Left lung (tissue), 14 donors: ENCODE measurements at regions of chr10 and their contacts with region 1.

Region 1: DNA sequence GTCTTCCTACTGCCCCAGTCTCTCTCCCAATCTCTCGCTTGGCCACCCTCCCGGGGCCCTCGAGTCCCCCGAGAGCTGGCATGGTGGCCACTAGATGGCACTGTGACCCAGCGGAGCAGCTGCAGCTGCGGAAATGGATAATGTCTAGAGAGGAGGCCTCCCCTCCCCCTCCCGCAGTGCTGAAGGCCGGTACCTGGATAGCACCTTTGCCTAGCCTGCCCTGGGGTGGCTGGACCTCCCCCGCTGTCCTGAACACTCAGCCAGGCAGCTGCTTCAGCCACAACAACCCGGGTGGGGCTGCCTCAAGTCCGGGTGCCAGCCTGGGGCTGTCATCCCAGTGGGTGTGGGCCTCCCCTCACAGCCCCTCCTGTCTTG is 65.2 kb downstream of the GOLGA7B start:
- DNase-seq: peak; percentile 57 to 91 (median 77)
- ATAC-seq: peak; percentile 91
- H3K4me3 ChIP-seq: no peak overlapping the region
- H3K27ac ChIP-seq: no peak overlapping the region
- H3K4me1 ChIP-seq: peaks cover 0 to 2% of the 10 kb centered on the region in 2 donors
- H3K27me3 ChIP-seq: peaks cover 0 to 36% of the 10 kb centered on the region in 2 donors
- CTCF ChIP-seq: peak; percentile 86 to 93

Region 2: GRCh38 chr10:97623277-97623676 is 291.5 kb before region 1 on chr10:
- intact Hi-C with region 1: no loop called
- DNase-seq: no peak
- ATAC-seq: no peak
- H3K4me3 ChIP-seq: no peak overlapping the region
- H3K27ac ChIP-seq: no peak overlapping the region
- H3K4me1 ChIP-seq: no peaks in the 10 kb centered on the region
- H3K27me3 ChIP-seq: no peaks in the 10 kb centered on the region
- CTCF ChIP-seq: no peak

Region 3: GRCh38 chr10:97981816-97982215 is 67.0 kb after region 1 on chr10:
- intact Hi-C with region 1: no loop called
- DNase-seq: no peak
- ATAC-seq: no peak
- H3K4me3 ChIP-seq: no peak overlapping the region
- H3K27ac ChIP-seq: no peak overlapping the region
- H3K4me1 ChIP-seq: no peaks in the 10 kb centered on the region
- H3K27me3 ChIP-seq: peaks cover 0 to 36% of the 10 kb centered on the region in 2 donors
- CTCF ChIP-seq: no peak

Region 4: GRCh38 chr10:97991871-97992270 is 77.0 kb after region 1 on chr10:
- intact Hi-C with region 1: no loop called
- DNase-seq: peak in 2 of 4 donors; percentile 15 to 39
- ATAC-seq: peak; percentile 38
- H3K4me3 ChIP-seq: no peak overlapping the region
- H3K27ac ChIP-seq: no peak overlapping the region
- H3K4me1 ChIP-seq: no peaks in the 10 kb centered on the region
- H3K27me3 ChIP-seq: peaks cover 0 to 10% of the 10 kb centered on the region in 2 donors
- CTCF ChIP-seq: no peak

Region 5: DNA sequence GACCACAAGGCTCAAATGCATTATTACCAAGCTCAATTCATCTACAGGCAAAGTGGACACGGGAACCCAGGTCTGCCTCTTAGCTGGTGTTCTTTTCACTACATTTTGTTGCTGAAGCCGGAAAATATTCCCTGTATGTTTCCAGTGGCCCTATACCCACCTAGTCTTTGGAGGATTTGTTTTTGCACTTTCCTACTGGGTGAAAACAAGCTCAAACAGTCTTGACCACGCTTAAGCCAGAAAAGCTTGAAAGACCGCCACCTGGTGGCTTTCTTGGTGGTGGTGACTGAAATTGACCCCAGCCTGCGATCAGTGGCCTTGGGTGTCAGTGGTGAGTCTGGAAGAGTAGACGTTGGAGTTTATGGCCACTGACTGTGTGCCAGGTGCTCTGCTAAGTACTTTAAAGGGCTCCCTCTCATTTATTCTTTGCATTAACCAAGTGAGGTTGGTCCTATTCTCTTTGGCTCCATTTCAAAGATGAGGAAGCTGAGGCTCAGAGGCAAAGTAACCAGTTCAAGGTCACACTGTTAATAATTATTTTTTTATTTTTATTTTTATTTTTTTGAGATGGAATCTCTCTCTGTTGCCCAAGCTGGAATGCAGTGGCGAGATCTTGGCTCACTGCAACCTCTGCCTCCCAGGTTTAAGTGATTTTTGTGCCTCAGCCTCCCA is 126.7 kb after region 1 on chr10:
- intact Hi-C with region 1: loop called in 1 of 2 experiments (anchors 5 kb)
- DNase-seq: peak in 3 of 4 donors; percentile 31 to 62 (median 43)
- ATAC-seq: peak; percentile 78
- H3K4me3 ChIP-seq: no peak overlapping the region
- H3K27ac ChIP-seq: no peak overlapping the region
- H3K4me1 ChIP-seq: no peaks in the 10 kb centered on the region
- H3K27me3 ChIP-seq: peaks cover 0 to 64% of the 10 kb centered on the region in 2 donors
- CTCF ChIP-seq: peak; percentile 54 to 57